Common myeloid progenitor, CD34-positive (primary cell): ENCODE measurements at regions of chr10 and their contacts with region 1.

Region 1: DNA sequence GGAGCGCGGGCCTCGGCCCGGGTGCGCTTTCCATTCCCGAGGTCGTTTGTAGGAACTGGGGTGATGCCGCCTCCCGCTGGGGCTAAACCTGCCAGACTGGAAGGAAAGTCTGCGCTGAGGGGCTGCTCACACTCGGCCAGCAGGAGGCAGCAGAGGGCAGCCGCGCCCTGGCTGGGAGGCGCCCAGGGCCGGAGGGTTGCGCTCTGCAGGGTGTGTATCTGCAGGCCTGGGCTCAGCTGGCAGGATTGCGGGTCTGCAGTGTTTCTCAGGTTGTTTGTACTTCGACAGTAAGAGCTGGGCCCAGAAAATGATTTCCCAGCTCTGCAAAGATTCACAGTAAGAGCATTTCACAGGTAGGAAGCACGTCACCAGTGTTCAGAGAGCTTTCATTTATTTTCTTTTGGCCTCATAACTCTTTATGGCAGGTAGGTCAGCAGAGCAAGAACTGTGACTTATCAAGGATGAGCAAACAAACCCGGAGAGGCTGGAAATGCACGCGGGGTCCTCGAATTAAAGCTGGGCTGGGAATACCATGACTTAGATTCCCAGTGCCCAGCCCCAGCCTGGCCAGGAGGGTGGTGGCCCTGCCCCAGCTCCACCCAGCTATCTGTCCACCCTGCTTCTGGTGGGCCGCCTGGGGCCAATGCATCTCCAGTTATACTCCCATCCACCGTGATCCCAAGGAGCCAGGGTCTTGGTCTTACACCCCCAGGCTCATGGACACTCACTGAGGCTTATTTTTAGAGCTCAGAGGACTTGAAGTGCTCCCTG is 15.2 kb upstream of the PPP2R2D start:
- DNase-seq: peak; percentile 63 to 81 (median 80)
- H3K4me3 ChIP-seq: no peak overlapping the region
- H3K27ac ChIP-seq: no peak overlapping the region
- H3K4me1 ChIP-seq: peaks cover 0 to 7% (median 1%) of the 10 kb centered on the region in 4 experiments
- H3K27me3 ChIP-seq: peaks cover 0 to 2% (median 0%) of the 10 kb centered on the region in 5 experiments

Region 2: GRCh38 chr10:131774681-131775085 is 110.9 kb before region 1 on chr10:
- CTCF ChIA-PET with region 1: no interaction called
- POLR2A ChIA-PET with region 1: no interaction called
- DNase-seq: no peak
- H3K4me3 ChIP-seq: no peak overlapping the region
- H3K27ac ChIP-seq: no peak overlapping the region
- H3K4me1 ChIP-seq: no peaks in the 10 kb centered on the region
- H3K27me3 ChIP-seq: peaks cover 0 to 10% (median 2%) of the 10 kb centered on the region in 5 experiments

Region 3: DNA sequence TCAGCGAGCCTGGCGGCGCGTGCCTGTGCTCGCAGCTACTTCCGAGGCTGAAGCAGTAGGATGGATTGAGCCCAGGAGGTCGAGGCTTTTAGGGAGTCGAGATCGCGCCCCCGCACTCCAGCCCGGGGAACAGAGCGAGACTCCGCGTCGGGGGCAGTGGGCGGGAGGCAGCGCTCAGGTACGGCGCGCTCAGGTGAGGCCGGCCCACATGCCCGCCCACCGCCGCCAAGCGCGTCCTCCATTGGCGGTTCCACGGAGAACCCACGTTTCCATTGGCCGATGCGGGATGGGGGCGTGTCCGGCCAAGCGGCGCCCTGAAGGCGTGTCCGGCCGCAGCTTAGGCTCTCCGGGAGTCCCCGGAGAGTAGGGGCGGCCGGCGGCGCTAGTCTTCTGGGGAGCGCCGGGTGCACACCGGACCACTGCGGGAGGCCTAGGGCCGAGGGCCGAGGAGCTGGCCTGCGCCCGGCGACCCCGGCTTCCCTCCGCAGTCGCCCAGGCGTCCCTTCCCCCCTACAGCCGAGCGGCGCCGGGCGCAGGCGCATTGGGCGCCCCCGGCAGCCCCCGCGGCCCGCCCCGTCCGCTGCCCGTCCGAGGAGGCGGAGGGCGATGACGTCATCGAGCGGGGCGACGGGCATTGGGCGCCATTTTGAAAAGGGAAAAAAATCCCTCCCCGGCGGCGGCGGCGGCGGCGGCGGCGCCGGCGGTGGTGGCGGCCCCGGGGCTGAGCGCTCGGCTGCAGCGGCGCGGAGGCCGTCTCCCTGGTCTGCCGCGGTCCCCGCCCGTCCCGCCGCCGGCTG is 15.0 kb after region 1 on chr10 and contains the start of gene PPP2R2D:
- CTCF ChIA-PET with region 1: interaction called, 34 read pairs
- POLR2A ChIA-PET with region 1: no interaction called
- DNase-seq: peak; percentile 90 to 95 (median 95)
- H3K4me3 ChIP-seq: peak within 1 kb of the TSS; percentile 76 to 88 (median 83)
- H3K27ac ChIP-seq: peak within 1 kb of the TSS; percentile 54 to 86
- H3K4me1 ChIP-seq: peaks cover 11 to 66% (median 40%) of the 10 kb centered on the region in 4 experiments
- H3K27me3 ChIP-seq: peaks cover 0 to 5% (median 0%) of the 10 kb centered on the region in 5 experiments

Region 4: GRCh38 chr10:132023092-132023811 is 137.7 kb after region 1 on chr10:
- CTCF ChIA-PET with region 1: interaction called, 13 read pairs
- POLR2A ChIA-PET with region 1: no interaction called
- DNase-seq: peak; percentile 64 to 76 (median 76)
- H3K4me3 ChIP-seq: peak overlapping the region in 3 of 7 experiments; percentile 5 to 22 (median 17)
- H3K27ac ChIP-seq: no peak overlapping the region
- H3K4me1 ChIP-seq: peaks cover 0 to 7% (median 3%) of the 10 kb centered on the region in 4 experiments
- H3K27me3 ChIP-seq: peaks cover 0 to 46% (median 7%) of the 10 kb centered on the region in 5 experiments